ENCODE measurements at regions of chr5 and their contacts with region 1.

Region 1: GRCh38 chr5:177403792-177404640 is 3.6 kb upstream of the PFN3 start:
- DNase-seq: peak; percentile 65
- H3K4me3 ChIP-seq: peak overlapping the region; percentile 55 to 74 (median 65)
- H3K27ac ChIP-seq: no peak overlapping the region
- H3K4me1 ChIP-seq: peaks cover 28% of the 10 kb centered on the region
- H3K27me3 ChIP-seq: no peaks in the 10 kb centered on the region
- CTCF ChIP-seq: peak; percentile 35 to 82

Region 2: DNA sequence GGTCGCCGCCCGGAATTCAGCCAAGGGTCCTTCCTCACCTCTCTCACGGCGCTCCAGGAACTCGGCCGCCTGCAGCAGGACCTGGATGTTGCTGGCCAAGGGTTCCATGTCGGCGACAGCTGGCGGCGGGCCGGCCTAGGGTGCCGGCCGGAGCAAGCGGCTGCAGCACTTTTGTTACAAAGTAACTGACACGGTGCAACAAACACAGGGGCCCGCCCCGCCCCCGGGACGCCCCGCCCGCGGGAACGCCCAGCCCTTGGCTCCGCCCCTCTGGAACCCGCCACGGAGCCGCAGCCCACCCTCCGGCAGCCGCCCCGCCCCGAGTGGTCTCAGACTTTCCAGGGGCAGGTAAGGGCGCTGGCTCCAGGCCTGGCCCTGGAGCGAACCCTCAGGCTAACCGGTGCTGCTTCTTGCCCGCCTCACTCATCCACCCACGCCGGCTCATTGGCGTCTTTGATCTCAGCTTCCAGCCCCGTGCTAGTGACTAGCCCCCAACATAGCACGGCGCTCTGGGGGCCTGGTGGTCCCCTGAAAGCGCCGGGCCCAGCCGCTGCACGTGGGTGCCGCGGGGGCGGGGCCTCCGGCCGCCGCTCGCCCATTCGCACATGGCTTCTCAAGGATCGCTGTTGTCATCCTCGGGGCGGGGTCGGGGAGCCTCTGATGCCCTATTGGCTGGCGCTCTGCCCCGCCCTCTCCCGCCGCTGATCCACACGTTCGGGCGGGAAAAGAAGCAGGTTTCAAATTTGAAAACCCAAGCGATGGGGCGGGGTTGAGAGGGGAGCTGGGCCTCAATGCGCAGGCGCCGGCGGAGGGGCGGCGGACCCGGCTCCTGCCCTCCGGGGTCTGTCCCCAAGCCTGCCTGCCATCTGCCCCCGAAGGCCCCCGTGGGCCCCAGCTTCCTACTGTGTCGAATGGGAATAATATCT is 92.0 kb before region 1 on chr5 and contains the start of gene MXD3:
- CTCF ChIA-PET with region 1: no interaction called
- dilution Hi-C with region 1: no loop called
- in situ Hi-C with region 1: loop called in 1 of 2 experiments (anchors 5 kb)
- intact Hi-C with region 1: no loop called
- DNase-seq: peak; percentile 90
- H3K4me3 ChIP-seq: peak within 1 kb of the TSS; percentile 51 to 75 (median 63)
- H3K27ac ChIP-seq: peak within 1 kb of the TSS; percentile 62
- H3K4me1 ChIP-seq: peaks cover 27% of the 10 kb centered on the region
- H3K27me3 ChIP-seq: no peaks in the 10 kb centered on the region
- CTCF ChIP-seq: no peak
- total RNA-seq, gene MXD3: 0.83 to 10.7 TPM

Region 3: DNA sequence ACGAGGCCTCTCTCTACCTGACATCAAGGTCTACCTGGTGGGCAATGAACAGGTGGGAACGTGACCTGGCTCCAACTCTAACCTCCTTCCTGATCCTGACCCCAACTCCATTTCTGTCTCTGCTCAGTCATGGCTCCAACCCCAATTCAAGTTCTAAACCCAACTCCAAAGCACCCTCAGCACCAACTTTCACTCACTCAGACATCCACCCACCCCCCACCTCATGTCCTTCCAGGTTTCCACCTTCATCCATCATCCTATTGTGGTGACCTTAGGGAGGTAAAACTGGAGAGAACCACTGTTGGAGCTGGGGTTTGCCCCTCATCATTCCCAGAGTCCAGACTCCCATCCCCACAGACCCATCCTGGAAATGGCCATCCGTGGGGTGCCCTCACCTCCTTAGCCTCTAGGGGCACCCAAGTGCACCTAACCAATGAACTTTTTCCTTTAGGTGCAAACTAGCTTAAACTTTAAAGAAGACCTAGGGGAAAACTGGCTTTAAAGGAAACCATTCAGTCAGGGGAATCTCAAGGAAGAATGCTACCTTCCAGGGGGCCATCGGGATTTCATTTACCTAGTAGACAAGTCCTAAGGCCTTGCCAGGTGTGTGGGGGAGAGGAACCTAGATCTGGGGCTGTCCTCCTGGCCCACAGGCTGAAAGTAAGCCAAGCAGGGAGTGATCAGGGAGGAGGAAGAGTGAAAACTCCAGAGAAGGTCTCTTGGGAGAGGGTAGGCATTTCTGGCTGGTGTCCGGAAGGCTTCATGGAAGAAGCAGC is 35.0 kb before region 1 on chr5:
- CTCF ChIA-PET with region 1: no interaction called
- dilution Hi-C with region 1: loop called (anchors 5 kb)
- in situ Hi-C with region 1: no loop called
- intact Hi-C with region 1: no loop called
- DNase-seq: no peak
- H3K4me3 ChIP-seq: no peak overlapping the region
- H3K27ac ChIP-seq: no peak overlapping the region
- H3K4me1 ChIP-seq: peaks cover 5% of the 10 kb centered on the region
- H3K27me3 ChIP-seq: no peaks in the 10 kb centered on the region
- CTCF ChIP-seq: peak; percentile 78 to 82

Region 4: GRCh38 chr5:177425801-177426565 is 22.0 kb after region 1 on chr5:
- CTCF ChIA-PET with region 1: no interaction called
- dilution Hi-C with region 1: no loop called
- in situ Hi-C with region 1: no loop called
- intact Hi-C with region 1: loop called (anchors 1 kb)
- DNase-seq: peak; percentile 100
- H3K4me3 ChIP-seq: peak overlapping the region; percentile 51 to 68 (median 54)
- H3K27ac ChIP-seq: peak overlapping the region; percentile 71
- H3K4me1 ChIP-seq: peaks cover 31% of the 10 kb centered on the region
- H3K27me3 ChIP-seq: no peaks in the 10 kb centered on the region
- CTCF ChIP-seq: no peak

Region 5: DNA sequence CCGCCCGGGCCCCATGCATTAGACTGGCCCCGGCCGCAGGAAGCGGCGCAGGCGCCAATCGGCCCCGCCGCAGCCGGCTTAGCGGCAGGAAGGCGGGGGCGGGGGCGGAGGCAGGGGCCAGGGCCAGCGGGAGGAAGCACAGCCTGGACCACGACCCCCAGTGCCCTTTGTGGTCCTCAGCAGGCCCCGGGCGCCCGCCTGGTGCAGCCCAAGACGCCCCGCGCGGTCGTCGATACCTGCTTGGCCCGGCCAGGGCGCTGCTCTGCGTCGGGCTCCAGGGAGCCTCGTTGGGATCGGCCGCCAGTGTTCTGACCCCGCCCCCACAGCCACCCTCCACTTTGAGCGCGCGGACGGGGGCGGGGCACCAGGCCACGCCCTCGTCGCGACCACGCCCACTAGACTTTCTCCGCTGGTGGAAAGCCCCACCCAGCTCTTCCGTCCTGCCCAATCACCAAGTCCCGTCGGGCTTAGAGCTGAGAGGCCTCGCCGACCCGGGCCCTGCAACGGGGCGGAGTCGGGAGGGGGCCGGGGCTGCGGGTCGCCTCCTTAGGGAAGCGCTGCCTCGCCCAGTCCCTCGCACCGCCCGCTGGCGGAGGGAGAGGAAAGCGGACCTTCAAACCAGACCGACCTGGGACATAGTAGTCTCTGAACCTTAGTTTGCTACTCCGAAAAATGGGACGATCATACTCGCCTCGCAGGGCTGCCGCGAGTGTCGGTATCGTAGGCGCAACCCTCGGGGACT is 93.4 kb after region 1 on chr5 and contains the start of gene PDLIM7:
- CTCF ChIA-PET with region 1: interaction called, 8 read pairs
- dilution Hi-C with region 1: no loop called
- in situ Hi-C with region 1: no loop called
- intact Hi-C with region 1: loop called (anchors 1 kb)
- DNase-seq: peak; percentile 95
- H3K4me3 ChIP-seq: peak within 1 kb of the TSS; percentile 73 to 80 (median 74)
- H3K27ac ChIP-seq: peak within 1 kb of the TSS; percentile 37
- H3K4me1 ChIP-seq: peaks cover 61% of the 10 kb centered on the region
- H3K27me3 ChIP-seq: no peaks in the 10 kb centered on the region
- CTCF ChIP-seq: peak in 1 of 2 donors; percentile 14
- total RNA-seq, gene PDLIM7: 235 to 259 TPM

Region 6: GRCh38 chr5:177592010-177592834 is 188.2 kb after region 1 on chr5 and contains the start of gene TMED9:
- CTCF ChIA-PET with region 1: no interaction called
- dilution Hi-C with region 1: no loop called
- in situ Hi-C with region 1: no loop called
- intact Hi-C with region 1: loop called (anchors 5 kb)
- DNase-seq: peak; percentile 91
- H3K4me3 ChIP-seq: peak within 1 kb of the TSS; percentile 94 to 98 (median 97)
- H3K27ac ChIP-seq: peak within 1 kb of the TSS; percentile 65
- H3K4me1 ChIP-seq: peaks cover 6% of the 10 kb centered on the region
- H3K27me3 ChIP-seq: no peaks in the 10 kb centered on the region
- CTCF ChIP-seq: peak in 1 of 2 donors; percentile 8
- total RNA-seq, gene TMED9: 139 to 275 TPM